Gastrocnemius medialis (tissue), 4 donors: ENCODE measurements at regions of chr17 and their contacts with region 1.

Region 1: DNA sequence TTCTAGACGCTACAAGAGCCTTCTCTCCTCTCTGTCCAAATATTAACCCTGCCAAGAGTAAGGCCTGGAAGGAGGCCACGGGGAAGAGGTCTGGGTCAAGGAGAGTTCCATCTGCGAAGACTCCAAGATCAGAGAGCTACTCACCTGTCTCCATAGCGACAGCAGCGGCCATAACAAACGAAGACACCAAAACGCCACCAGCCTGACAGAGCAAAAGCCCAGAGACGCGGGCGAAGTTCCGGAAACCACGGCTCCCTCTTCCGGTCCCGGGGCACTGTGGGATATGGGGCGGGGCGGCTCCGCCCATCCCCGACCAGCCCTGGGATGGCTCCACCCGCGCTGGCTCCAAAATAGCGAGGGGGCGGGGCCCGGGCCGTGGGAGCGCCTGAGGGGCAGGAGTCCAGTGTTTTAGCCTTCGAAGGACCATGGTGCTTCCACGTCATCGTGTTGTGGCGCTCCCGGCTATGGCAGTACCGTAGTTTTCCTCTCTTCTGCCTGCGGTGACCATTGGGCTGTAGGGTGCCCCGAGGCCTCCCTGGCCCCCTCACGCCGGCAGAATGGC is at the starts of genes C17orf100 and MED31:
- DNase-seq: peak; percentile 88 to 94
- ATAC-seq: peak; percentile 93 to 96
- H3K4me3 ChIP-seq: peak within 1 kb of the TSS; percentile 60 to 95 (median 86)
- H3K27ac ChIP-seq: peak within 1 kb of the TSS; percentile 80 to 93 (median 86)
- H3K4me1 ChIP-seq: peaks cover 25 to 33% of the 10 kb centered on the region in 2 donors
- H3K27me3 ChIP-seq: peaks cover 12 to 18% (median 17%) of the 10 kb centered on the region in 3 donors
- CTCF ChIP-seq: no peak
- POLR2A ChIP-seq: peak; percentile 57 to 81
- total RNA-seq, gene C17orf100: 0.27 TPM in 1 of 4 donors, not detected in the others
- total RNA-seq, gene MED31: 3.8 to 8.6 (median 7.2) TPM

Region 2: GRCh38 chr17:6640536-6641373 is 10.7 kb before region 1 on chr17 and contains the starts of genes KIAA0753 and TXNDC17:
- in situ Hi-C with region 1: no loop called
- intact Hi-C with region 1: loop called (anchors 1 kb)
- DNase-seq: peak; percentile 84 to 86
- ATAC-seq: peak; percentile 96
- H3K4me3 ChIP-seq: peak within 1 kb of the TSS; percentile 91 to 97 (median 93)
- H3K27ac ChIP-seq: peak within 1 kb of the TSS; percentile 72 to 90 (median 82)
- H3K4me1 ChIP-seq: peaks cover 10 to 22% of the 10 kb centered on the region in 2 donors
- H3K27me3 ChIP-seq: no peaks in the 10 kb centered on the region
- CTCF ChIP-seq: peak in 1 of 5 experiments; percentile 14
- POLR2A ChIP-seq: peak; percentile 66 to 69
- total RNA-seq, gene KIAA0753: 3.0 to 6.3 (median 3.6) TPM
- total RNA-seq, gene TXNDC17: 85.5 to 183 (median 106) TPM

Region 3: DNA sequence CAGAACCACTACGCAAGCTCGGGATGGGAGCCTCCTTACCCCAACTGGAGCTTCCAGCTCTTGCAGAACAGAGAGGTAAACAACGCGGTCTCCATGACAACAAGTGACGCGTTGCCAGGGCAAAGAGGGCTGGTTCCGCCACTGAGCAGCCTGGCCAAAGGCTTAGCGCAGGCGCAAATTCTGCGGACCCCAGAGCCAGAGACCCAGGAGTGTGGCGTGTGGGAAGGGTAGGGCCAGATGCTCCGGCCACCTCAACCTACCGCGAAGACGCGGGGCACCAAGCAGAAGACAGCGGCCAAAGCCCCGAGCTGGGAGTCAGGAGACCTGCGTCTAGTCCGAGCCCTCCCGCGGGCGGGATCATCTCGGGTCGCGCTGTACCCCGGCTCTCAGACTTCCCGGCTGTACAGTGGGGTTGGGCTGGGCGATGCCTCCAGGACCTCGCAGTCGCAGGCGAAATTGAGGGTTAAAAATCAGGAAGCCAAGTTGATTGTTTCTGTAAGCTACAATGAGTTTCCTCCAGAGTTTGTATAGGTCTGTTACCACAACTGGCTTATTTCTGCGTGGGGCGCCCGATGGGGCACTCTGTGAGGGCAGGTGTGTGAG is 180.3 kb after region 1 on chr17 and contains the start of gene TEKT1:
- in situ Hi-C with region 1: loop called in 1 of 4 experiments (anchors 25 kb)
- intact Hi-C with region 1: no loop called
- DNase-seq: peak; percentile 25 to 32
- ATAC-seq: no peak
- H3K4me3 ChIP-seq: peak within 1 kb of the TSS in 3 of 4 donors; percentile 6 to 37 (median 23)
- H3K27ac ChIP-seq: no peak within 1 kb of the TSS
- H3K4me1 ChIP-seq: no peaks in the 10 kb centered on the region
- H3K27me3 ChIP-seq: peaks cover 27 to 51% (median 49%) of the 10 kb centered on the region in 3 donors
- CTCF ChIP-seq: no peak
- POLR2A ChIP-seq: no peak
- total RNA-seq, gene TEKT1: not detected